ENCODE measurements at regions of chr15 and their contacts with region 1.

Region 1: DNA sequence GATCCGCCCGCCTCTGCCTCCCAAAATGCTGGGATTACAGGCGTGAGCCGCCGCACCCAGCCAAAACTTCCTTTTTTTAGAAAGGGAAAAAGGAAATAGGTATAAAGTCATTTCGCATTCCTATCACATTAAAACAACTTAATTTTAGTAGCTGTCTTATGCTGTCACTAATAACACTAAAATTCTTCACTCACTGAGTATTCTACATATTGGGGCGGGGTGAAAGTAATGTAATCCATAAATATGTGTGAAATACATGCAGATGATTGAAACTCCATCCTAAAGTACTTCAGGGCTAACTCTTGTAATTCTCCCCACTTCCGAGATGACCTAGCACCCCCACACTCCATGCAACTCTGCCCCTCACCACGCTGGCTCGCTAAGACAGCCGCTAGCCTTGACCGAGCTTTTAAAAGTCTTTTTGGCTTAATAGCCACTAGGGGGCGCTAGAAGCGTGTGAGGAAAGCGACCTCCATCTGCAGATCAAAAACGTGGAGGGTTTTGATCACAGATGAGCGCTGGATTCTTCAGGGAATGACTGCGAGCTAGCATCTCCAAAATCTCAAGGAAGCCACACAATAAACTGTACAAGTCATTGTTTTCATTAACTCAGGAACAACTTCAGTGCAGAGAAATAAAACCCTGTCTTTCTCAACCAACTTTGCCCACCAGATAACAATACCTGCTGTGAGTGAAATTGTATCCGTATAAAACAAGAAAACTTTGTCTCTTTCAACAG is 129.3 kb upstream of the IGF1R start:
- DNase-seq: no peak
- H3K4me3 ChIP-seq: no peak overlapping the region
- H3K27me3 ChIP-seq: peaks cover 2% of the 10 kb centered on the region; the same call in 1 of the 2 replicates
- CTCF ChIP-seq: peak; percentile 77

Region 2: GRCh38 chr15:98442379-98442833 is 76.6 kb before region 1 on chr15:
- CTCF ChIA-PET with region 1: interaction called, 15 read pairs
- POLR2A ChIA-PET with region 1: no interaction called
- DNase-seq: peak; percentile 57
- H3K4me3 ChIP-seq: no peak overlapping the region
- H3K27me3 ChIP-seq: peaks cover 5% of the 10 kb centered on the region
- CTCF ChIP-seq: peak; percentile 84

Region 3: GRCh38 chr15:98592136-98592535 is 73.1 kb after region 1 on chr15:
- CTCF ChIA-PET with region 1: no interaction called
- POLR2A ChIA-PET with region 1: no interaction called
- DNase-seq: no peak
- H3K4me3 ChIP-seq: no peak overlapping the region
- H3K27me3 ChIP-seq: peaks cover 5% of the 10 kb centered on the region; the same call in 1 of the 2 replicates
- CTCF ChIP-seq: no peak

Region 4: GRCh38 chr15:98647774-98648653 is 129.0 kb after region 1 on chr15 and contains the start of gene IGF1R:
- CTCF ChIA-PET with region 1: interaction called, 42 read pairs
- POLR2A ChIA-PET with region 1: no interaction called
- DNase-seq: no peak
- H3K4me3 ChIP-seq: peak within 1 kb of the TSS; percentile 95
- H3K27me3 ChIP-seq: peaks cover 9% of the 10 kb centered on the region
- CTCF ChIP-seq: 0 out of 2 replicates have a peak, but pooled peaks have one; percentile 22
- polyA plus RNA-seq, gene IGF1R: 21.2 and 36.2 TPM in 2 replicates

Region 5: DNA sequence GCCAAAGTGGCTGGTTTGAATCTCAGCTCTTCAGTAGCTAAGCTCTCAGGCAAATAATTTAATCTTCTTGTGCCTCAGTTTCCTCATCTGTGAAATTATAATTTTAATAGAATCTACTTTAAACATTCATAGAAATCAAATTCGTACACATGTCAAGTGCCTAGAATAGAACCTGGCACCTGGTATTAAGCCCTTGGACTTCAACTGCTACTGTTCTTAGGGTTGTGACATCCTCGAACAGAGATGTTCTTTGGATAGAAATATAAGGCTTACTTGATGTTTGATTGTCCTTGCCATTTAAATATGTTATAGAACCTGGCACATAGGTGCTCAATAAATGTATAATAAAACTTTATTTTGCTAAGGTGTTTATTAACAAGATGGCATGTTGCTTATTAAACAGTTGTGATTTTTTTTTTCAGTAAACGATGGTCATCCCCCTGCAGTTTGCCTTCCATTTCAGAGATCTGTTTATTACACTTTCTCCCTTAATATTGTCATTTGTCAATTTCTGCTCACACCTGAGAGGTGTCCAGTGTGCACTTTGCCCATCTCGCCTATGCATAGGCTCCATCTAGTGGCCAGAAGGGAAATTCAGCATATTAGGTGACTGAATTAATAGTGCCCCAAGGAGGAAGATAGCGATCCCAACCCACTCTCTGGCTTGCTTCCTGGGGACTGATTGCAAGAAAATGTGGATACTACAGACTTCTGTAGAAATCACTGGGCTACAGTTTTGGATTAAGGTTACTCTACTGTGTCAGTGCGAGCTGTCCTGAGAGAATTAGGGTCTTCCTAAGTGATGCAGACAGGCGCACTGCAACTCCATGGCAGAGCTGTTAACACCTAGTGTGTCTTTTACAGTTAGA is 140.1 kb after region 1 on chr15:
- CTCF ChIA-PET with region 1: interaction called, 10 read pairs
- POLR2A ChIA-PET with region 1: no interaction called
- DNase-seq: no peak
- H3K4me3 ChIP-seq: no peak overlapping the region
- H3K27me3 ChIP-seq: no peaks in the 10 kb centered on the region
- CTCF ChIP-seq: peak; percentile 90

Region 6: GRCh38 chr15:98904544-98904943 is 385.6 kb after region 1 on chr15:
- CTCF ChIA-PET with region 1: interaction called, 16 read pairs
- POLR2A ChIA-PET with region 1: no interaction called
- DNase-seq: no peak
- H3K4me3 ChIP-seq: no peak overlapping the region
- H3K27me3 ChIP-seq: no peaks in the 10 kb centered on the region
- CTCF ChIP-seq: peak; percentile 83

Region 7: DNA sequence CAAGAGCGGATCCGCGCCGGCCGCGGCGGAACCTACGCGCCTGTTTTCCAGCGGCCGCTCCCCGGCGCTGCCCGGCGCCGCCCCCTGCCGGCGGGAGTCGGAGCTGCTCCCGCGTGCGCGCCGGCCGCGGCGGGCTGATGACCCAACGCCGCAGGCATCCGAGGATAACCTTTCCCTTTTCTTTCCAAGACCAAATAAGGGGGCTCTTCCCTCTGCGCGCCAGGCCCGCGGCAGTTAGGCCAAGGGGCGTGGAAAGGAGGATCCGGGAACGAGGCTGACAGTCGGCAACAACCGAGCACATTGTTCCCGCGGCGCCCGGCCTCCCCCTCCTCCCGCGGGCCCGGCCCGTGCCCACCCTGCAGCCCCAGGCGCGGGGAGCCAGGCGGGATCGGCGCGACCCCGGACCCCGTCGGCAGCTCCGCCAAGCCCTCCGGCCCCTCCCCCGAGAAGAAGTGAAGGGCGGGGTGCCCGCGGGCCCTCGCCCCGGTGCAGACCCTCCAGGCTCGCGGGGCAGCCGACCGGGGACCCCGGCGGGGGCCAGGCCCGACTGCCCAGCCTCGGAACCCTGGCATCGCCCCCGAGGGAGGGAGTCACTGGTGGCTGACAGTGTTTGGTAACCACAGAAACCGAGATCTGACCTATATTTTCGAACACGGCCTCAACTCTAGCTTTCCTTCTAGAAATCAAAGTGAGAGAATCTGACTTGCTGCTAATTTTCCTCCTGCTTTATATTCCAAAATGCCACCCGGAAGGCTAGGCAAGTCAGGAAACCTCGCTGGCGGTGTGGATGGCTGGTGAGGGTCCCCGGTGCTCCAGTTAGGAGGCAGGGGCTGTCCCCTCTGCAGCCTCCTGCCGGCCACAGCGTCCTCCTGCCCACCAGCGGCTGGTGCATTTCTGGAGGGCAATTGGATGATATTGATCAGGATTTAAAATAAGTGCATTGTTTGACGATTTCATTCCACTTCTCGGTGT is 540.3 kb after region 1 on chr15:
- CTCF ChIA-PET with region 1: interaction called, 10 read pairs
- POLR2A ChIA-PET with region 1: no interaction called
- DNase-seq: peak; percentile 49
- H3K4me3 ChIP-seq: peak overlapping the region; percentile 41
- H3K27me3 ChIP-seq: peaks cover 1% of the 10 kb centered on the region; the same call in 1 of the 2 replicates
- CTCF ChIP-seq: peak; percentile 47

Measured in BJ (cell line).